ENCODE measurements at regions of chr4 and their contacts with region 1.

Region 1: GRCh38 chr4:99949034-99949998 is 759 bp downstream of the H2AZ1 start:
- DNase-seq: peak; percentile 91
- ATAC-seq: peak; percentile 62

Region 2: DNA sequence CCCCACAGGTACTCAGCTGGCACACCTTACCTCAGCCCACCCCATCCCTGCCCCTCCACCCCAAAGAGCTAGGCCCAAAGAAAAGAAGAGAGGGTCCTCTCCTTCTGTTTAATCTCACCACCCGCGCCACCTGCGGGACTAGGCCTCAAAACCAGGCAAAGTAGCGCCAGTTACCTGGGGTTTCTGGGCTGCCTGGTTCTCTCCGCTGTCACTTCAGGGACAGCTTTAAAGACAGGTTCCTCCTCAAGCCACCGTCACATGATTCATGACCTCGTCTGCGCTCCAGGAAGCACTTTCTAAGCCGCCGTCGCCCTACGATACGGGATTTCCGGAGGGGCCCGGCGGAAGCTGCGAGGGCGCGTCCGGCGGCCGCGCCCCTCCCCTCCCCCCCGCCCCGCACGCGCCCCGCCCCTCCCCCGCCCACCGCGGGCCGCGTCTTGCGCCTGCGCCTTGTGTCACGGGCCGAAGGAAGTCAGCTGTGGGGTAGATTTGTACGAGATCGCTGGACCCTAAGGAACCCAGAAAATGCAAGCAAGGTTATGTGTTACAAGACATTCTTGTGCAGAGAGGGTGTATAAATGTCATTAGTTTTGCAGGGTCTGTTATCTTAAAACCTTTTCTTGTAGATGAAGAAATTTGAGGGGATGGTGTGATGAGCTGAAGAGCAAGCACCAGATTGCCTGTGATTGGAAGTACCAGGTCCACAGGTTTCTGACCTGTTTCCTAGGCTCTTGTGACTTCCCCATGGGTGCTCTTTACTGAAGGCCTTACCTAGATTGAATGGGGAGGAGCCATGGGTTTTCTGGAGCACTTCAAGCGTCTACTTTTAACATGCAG is 54.9 kb before region 1 on chr4 and contains the start of gene LAMTOR3:
- intact Hi-C with region 1: loop called (anchors 10 kb)
- DNase-seq: peak; percentile 92
- ATAC-seq: peak; percentile 100
- total RNA-seq, gene LAMTOR3: 34.1 TPM